ENCODE measurements at regions of chr7 and their contacts with region 1.

Region 1: GRCh38 chr7:101823096-101823495 is 5.7 kb downstream of the CUX1 start:
- DNase-seq: no peak
- H3K4me3 ChIP-seq: no peak overlapping the region
- H3K4me3 Mint-ChIP-seq: no peak overlapping the region
- H3K27ac Mint-ChIP-seq: no peak overlapping the region
- H3K4me1 ChIP-seq: peaks cover 28% of the 10 kb centered on the region
- H3K4me1 Mint-ChIP-seq: peaks cover 39% of the 10 kb centered on the region
- H3K27me3 ChIP-seq: no peaks in the 10 kb centered on the region
- H3K27me3 Mint-ChIP-seq: no peaks in the 10 kb centered on the region
- CTCF ChIP-seq: no peak

Region 2: GRCh38 chr7:101812595-101812994 is 10.5 kb before region 1 on chr7:
- CTCF ChIA-PET with region 1: no interaction called
- POLR2A ChIA-PET with region 1: no interaction called
- intact Hi-C with region 1: no loop called
- DNase-seq: no peak
- H3K4me3 ChIP-seq: no peak overlapping the region
- H3K4me3 Mint-ChIP-seq: peak overlapping the region; percentile 19
- H3K27ac Mint-ChIP-seq: no peak overlapping the region
- H3K4me1 ChIP-seq: peaks cover 4% of the 10 kb centered on the region; the same call in 1 of the 2 replicates
- H3K4me1 Mint-ChIP-seq: no peaks in the 10 kb centered on the region
- H3K27me3 ChIP-seq: no peaks in the 10 kb centered on the region
- H3K27me3 Mint-ChIP-seq: no peaks in the 10 kb centered on the region
- CTCF ChIP-seq: peak in 1 of 2 experiments; percentile 10

Region 3: DNA sequence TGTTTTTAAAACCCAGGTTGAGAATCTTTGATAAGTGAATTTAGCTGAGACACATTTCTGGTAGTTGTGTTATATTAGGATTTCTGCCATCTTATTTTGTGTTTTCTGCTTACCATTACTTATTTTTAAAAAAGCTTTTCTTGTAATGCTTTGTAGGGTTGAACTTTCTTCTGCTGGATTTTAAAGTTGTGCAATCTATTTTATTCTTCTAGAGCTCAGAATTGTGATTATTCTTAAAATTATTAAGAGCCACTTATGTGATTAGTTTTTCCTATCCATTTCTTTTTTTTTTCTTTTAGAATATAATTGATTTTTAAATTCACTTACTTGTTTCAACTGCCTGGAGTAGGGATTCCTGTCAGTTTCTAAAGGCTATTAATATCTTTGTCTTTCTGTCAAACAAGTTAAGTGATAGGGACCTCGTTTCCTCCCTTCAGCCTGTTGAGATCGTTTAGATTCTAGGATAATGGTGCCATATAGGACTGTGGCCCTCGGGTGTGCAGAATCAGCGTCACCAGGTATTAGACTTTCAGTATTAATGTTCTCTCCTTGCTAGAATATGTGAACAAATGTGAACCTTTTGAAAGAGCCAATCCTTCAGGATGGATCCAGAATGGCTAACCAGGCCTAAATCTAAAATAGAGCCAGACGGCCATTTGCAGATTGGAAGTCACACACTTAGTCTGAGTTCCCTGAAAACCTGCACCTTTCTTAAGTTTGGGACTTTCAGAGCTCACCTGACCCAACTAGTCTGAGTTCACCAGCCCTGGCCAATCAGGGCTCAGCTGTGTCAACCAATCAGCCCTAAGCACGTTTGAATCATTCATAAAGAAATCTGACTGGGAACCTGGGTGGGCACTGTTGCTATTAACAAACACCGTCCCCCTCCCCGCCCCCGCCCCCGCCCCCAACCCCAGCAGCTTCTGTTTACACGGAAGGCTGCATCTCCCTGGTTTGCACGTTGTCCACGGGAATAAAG is 20.5 kb after region 1 on chr7:
- CTCF ChIA-PET with region 1: no interaction called
- POLR2A ChIA-PET with region 1: interaction called, 13 read pairs
- intact Hi-C with region 1: no loop called
- DNase-seq: no peak
- H3K4me3 ChIP-seq: no peak overlapping the region
- H3K4me3 Mint-ChIP-seq: no peak overlapping the region
- H3K27ac Mint-ChIP-seq: no peak overlapping the region
- H3K4me1 ChIP-seq: no peaks in the 10 kb centered on the region
- H3K4me1 Mint-ChIP-seq: no peaks in the 10 kb centered on the region
- H3K27me3 ChIP-seq: no peaks in the 10 kb centered on the region
- H3K27me3 Mint-ChIP-seq: no peaks in the 10 kb centered on the region
- CTCF ChIP-seq: no peak

Region 4: GRCh38 chr7:101884671-101885596 is 61.8 kb after region 1 on chr7:
- CTCF ChIA-PET with region 1: no interaction called
- POLR2A ChIA-PET with region 1: no interaction called
- intact Hi-C with region 1: no loop called
- DNase-seq: no peak
- H3K4me3 ChIP-seq: no peak overlapping the region
- H3K4me3 Mint-ChIP-seq: peak overlapping the region; percentile 33
- H3K27ac Mint-ChIP-seq: peak overlapping the region; percentile 95
- H3K4me1 ChIP-seq: peaks cover 56% of the 10 kb centered on the region
- H3K4me1 Mint-ChIP-seq: peaks cover 62% of the 10 kb centered on the region
- H3K27me3 ChIP-seq: no peaks in the 10 kb centered on the region
- H3K27me3 Mint-ChIP-seq: no peaks in the 10 kb centered on the region
- CTCF ChIP-seq: no peak

Region 5: GRCh38 chr7:102182016-102182415 is 358.9 kb after region 1 on chr7:
- CTCF ChIA-PET with region 1: no interaction called
- POLR2A ChIA-PET with region 1: no interaction called
- intact Hi-C with region 1: no loop called
- DNase-seq: no peak
- H3K4me3 ChIP-seq: no peak overlapping the region
- H3K4me3 Mint-ChIP-seq: no peak overlapping the region
- H3K27ac Mint-ChIP-seq: no peak overlapping the region
- H3K4me1 ChIP-seq: no peaks in the 10 kb centered on the region
- H3K4me1 Mint-ChIP-seq: no peaks in the 10 kb centered on the region
- H3K27me3 ChIP-seq: no peaks in the 10 kb centered on the region
- H3K27me3 Mint-ChIP-seq: no peaks in the 10 kb centered on the region
- CTCF ChIP-seq: no peak

Region 6: DNA sequence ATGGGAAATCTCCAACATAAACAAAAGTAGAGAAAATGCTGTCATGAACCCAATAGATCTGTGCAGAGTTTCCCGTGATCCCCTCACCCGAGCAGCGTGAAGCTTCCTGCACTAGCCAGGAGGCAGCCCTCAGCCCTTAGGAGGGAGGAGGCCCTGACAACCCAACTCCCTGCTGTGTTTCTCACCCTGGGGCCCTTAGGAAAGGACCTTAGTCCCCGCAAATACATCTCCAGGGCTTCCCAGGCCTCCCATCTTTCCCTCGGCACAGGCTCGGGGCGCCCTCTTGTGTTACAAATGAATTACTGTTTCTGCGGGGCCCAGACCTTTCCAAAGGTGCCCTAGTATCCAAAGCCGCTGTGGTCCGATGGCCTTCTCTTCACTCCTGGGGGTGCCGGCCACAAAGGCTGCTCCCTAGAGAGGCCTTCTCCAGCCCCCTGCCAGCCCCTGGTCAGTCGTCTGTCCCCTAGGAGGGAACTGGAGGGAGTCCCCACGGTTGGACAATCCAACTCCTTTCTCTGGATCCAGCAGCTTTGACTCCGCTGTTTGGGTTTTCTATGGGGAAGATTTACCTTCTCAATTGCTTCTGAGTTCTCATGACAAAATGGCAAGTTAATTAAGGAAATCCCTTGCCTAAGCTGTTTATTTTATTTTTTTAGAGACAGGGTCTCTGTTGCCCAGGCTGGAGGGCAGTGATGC is 413.6 kb after region 1 on chr7:
- CTCF ChIA-PET with region 1: no interaction called
- POLR2A ChIA-PET with region 1: no interaction called
- intact Hi-C with region 1: loop called (anchors 2 kb)
- DNase-seq: peak; percentile 74 to 81
- H3K4me3 ChIP-seq: no peak overlapping the region
- H3K4me3 Mint-ChIP-seq: no peak overlapping the region
- H3K27ac Mint-ChIP-seq: no peak overlapping the region
- H3K4me1 ChIP-seq: no peaks in the 10 kb centered on the region; the same call in 1 of the 2 replicates
- H3K4me1 Mint-ChIP-seq: no peaks in the 10 kb centered on the region
- H3K27me3 ChIP-seq: no peaks in the 10 kb centered on the region
- H3K27me3 Mint-ChIP-seq: no peaks in the 10 kb centered on the region
- CTCF ChIP-seq: peak; percentile 82 to 88